Mammary epithelial cell (primary cell): ENCODE measurements at regions of chr4 and their contacts with region 1.

Region 1: GRCh38 chr4:65416891-65417290 is 253.4 kb downstream of the EPHA5 start:
- DNase-seq: no peak
- H3K4me3 ChIP-seq: no peak overlapping the region
- H3K27ac ChIP-seq: no peak overlapping the region
- H3K4me1 ChIP-seq: no peaks in the 10 kb centered on the region
- H3K27me3 ChIP-seq: no peaks in the 10 kb centered on the region
- CTCF ChIP-seq: no peak

Region 2: GRCh38 chr4:65661471-65661870 is 244.6 kb after region 1 on chr4:
- CTCF ChIA-PET with region 1: interaction called, 18 read pairs
- dilution Hi-C with region 1: no loop called
- in situ Hi-C with region 1: no loop called
- intact Hi-C with region 1: no loop called
- DNase-seq: no peak
- H3K4me3 ChIP-seq: no peak overlapping the region
- H3K27ac ChIP-seq: no peak overlapping the region
- H3K4me1 ChIP-seq: no peaks in the 10 kb centered on the region
- H3K27me3 ChIP-seq: peaks cover 7% of the 10 kb centered on the region
- CTCF ChIP-seq: no peak

Region 3: DNA sequence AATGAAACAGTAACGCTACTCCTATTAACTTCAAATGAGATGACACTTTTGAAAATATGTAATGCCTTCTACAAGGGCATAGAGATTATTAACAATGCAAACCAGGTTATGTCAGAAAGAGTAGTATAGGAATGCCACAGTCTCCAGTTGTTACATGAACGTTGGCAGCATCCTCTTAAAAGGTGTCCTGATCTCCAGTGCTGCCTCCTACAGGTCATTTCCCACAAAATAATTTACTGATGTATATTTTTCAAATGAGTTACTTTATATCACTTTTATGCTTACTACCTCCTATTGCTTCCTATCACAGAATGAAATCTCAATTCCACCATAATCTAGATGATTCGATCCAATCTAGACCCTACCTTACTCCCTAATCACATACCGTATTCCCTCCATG is 448.6 kb after region 1 on chr4:
- CTCF ChIA-PET with region 1: no interaction called
- dilution Hi-C with region 1: no loop called
- in situ Hi-C with region 1: no loop called
- intact Hi-C with region 1: loop called (anchors 5 kb)
- DNase-seq: peak; percentile 20
- H3K4me3 ChIP-seq: no peak overlapping the region
- H3K27ac ChIP-seq: no peak overlapping the region
- H3K4me1 ChIP-seq: no peaks in the 10 kb centered on the region
- H3K27me3 ChIP-seq: no peaks in the 10 kb centered on the region
- CTCF ChIP-seq: peak; percentile 49 to 59